Activated CD4-positive, alpha-beta memory T cell treated with anti-CD3 and anti-CD28 coated beads for 36 hours (primary cell): ENCODE measurements at regions of chr4 and their contacts with region 1.

Region 1: DNA sequence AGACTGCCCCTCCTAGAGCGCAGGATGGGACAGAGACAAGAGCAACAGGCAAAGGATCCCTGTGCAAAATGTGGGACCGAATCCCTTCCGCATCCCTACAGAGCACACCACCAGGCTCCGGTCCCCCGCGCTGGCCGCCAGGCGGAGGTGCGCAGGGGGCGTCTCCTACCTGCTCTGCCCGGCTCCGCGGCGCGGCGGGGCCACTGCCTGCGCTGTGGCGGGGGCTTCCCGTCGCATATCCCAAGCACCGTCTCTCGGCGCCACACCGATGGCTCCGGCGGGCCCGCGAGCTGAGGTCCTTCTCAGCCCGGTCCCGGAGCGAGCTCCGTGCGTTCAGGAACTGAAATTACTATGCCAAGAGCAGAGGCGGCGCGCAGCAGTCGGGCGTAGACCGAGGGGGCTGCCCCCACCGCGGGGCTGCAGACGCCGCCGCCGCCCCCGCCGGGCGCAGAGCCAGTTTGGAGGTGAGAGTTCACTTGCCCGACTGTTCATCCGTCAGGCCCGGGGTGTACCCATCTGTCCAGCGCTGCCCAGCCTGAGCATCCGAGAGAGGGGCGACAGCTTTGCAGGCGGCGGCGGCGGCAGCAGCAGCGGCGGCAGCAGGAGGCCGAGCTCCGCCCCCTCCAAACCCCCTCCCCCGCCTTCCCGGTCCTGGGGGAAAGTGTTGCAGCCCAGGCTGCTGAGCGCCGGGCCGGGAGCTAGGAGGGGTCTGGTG is at the start of gene GPRIN3:
- DNase-seq: peak; percentile 81
- H3K4me3 Mint-ChIP-seq: peak within 1 kb of the TSS; percentile 89
- H3K27ac Mint-ChIP-seq: peak within 1 kb of the TSS; percentile 83
- H3K4me1 Mint-ChIP-seq: peaks cover 62% of the 10 kb centered on the region
- H3K27me3 Mint-ChIP-seq: no peaks in the 10 kb centered on the region
- total RNA-seq, gene GPRIN3: 20.0 to 22.7 TPM

Region 2: GRCh38 chr4:89158884-89159503 is 148.6 kb before region 1 on chr4:
- CTCF ChIA-PET with region 1: interaction called, 3 read pairs
- POLR2A ChIA-PET with region 1: no interaction called
- intact Hi-C with region 1: loop called (anchors 10 kb)
- DNase-seq: no peak
- H3K4me3 Mint-ChIP-seq: no peak overlapping the region
- H3K27ac Mint-ChIP-seq: no peak overlapping the region
- H3K4me1 Mint-ChIP-seq: no peaks in the 10 kb centered on the region
- H3K27me3 Mint-ChIP-seq: peaks cover 5% of the 10 kb centered on the region

Region 3: DNA sequence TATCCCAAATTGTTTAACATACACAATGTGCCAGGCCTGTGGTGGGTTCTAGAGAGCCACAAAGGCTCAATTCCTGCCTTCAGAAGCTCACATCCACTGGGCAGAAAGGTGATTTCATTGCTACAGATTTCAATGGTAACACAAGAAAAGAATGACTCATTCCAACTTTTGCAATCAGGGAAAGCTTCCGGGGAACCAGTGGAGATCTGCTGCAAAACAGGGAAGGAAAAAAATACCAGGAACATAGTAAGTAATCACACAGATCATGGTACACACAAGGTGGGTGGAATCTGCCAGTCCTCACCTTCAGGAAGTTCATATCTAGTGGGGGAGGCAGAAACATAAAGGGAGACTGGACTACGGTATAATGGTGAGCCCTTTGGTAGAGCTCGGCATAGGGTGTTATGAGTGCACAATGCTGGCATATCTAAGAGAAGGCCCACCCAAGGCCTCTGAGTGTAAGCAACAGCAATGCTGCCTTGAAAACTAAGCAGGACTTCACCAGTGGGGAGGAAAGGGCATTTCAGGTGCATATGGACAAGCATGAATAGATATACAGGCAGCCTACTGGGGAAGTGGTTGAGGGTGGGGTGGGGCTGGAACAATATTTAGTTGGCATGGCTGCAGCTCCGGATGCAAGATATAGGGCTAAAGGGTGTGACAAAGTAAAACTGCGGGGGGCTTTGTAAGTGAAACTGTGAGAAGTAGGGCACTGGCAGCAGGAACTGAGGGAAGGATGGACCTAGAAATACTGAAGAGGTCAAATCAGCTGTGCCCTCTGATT is 24.2 kb before region 1 on chr4:
- CTCF ChIA-PET with region 1: interaction called, 60 read pairs
- POLR2A ChIA-PET with region 1: interaction called, 139 read pairs
- intact Hi-C with region 1: loop called (anchors 1 kb)
- DNase-seq: peak; percentile 65
- H3K4me3 Mint-ChIP-seq: peak overlapping the region; percentile 20
- H3K27ac Mint-ChIP-seq: peak overlapping the region; percentile 77
- H3K4me1 Mint-ChIP-seq: peaks cover 72% of the 10 kb centered on the region
- H3K27me3 Mint-ChIP-seq: no peaks in the 10 kb centered on the region

Region 4: GRCh38 chr4:89365776-89366175 is 58.2 kb after region 1 on chr4:
- CTCF ChIA-PET with region 1: no interaction called
- POLR2A ChIA-PET with region 1: interaction called, 3 read pairs
- intact Hi-C with region 1: loop called (anchors 5 kb)
- DNase-seq: no peak
- H3K4me3 Mint-ChIP-seq: no peak overlapping the region
- H3K27ac Mint-ChIP-seq: peak overlapping the region; percentile 31
- H3K4me1 Mint-ChIP-seq: peaks cover 11% of the 10 kb centered on the region
- H3K27me3 Mint-ChIP-seq: no peaks in the 10 kb centered on the region

Region 5: GRCh38 chr4:89586864-89587263 is 279.3 kb after region 1 on chr4:
- CTCF ChIA-PET with region 1: no interaction called
- POLR2A ChIA-PET with region 1: no interaction called
- intact Hi-C with region 1: no loop called
- DNase-seq: no peak
- H3K4me3 Mint-ChIP-seq: no peak overlapping the region
- H3K27ac Mint-ChIP-seq: no peak overlapping the region
- H3K4me1 Mint-ChIP-seq: peaks cover 2% of the 10 kb centered on the region
- H3K27me3 Mint-ChIP-seq: peaks cover 4% of the 10 kb centered on the region